Calu3 (cell line): ENCODE measurements at regions of chr10 and their contacts with region 1.

Region 1: DNA sequence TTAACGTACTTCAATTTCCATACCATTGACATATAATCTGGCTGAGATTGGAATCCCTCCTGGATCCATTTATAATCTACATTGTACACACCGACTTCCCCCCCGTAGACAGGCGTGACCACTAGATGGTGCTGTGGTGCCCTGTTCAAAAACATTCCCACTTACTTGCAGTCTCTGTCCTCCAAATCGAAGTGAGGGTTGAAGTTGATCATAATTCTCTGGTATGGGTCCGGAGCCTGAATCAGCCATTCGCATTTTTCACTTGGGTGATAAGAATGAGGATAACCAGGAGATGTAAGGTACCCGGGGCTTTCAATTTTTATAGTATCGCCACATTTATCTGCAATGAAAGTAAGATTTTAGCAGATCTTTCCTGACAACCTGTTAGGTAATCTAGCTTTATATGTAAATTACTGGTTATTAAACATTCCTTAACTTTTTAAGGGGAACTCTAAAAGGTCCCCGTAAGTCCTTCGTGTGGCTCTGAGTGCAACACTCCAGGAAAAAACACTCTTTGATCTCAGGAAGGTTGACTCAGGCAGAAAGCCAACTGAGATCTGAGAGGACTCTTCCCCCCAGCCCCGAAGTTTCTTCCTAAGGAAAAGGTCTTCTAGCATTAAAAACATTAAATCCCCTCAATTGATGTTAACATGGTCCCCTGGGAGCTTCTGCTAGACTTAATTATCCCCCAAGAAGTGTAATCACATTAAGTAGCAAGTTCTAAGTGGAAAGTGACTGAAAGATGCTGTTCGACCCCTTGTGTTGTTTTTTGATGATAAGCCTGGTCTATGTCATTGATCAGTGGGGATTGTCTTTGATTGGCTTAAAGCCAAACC is 3.7 kb downstream of the NRP1 start:
- DNase-seq: peak; percentile 87
- H3K4me3 Mint-ChIP-seq: peak overlapping the region; percentile 85
- H3K27ac Mint-ChIP-seq: peak overlapping the region; percentile 90
- H3K4me1 Mint-ChIP-seq: peaks cover 38% of the 10 kb centered on the region
- H3K27me3 Mint-ChIP-seq: no peaks in the 10 kb centered on the region
- CTCF ChIP-seq: peak; percentile 73

Region 2: GRCh38 chr10:33509231-33509831 is 178.6 kb after region 1 on chr10:
- CTCF ChIA-PET with region 1: no interaction called
- intact Hi-C with region 1: loop called (anchors 10 kb)
- DNase-seq: peak; percentile 75
- H3K4me3 Mint-ChIP-seq: peak overlapping the region; percentile 36
- H3K27ac Mint-ChIP-seq: peak overlapping the region; percentile 95
- H3K4me1 Mint-ChIP-seq: peaks cover 16% of the 10 kb centered on the region
- H3K27me3 Mint-ChIP-seq: no peaks in the 10 kb centered on the region
- CTCF ChIP-seq: no peak

Region 3: GRCh38 chr10:33715303-33715975 is 384.7 kb after region 1 on chr10:
- CTCF ChIA-PET with region 1: no interaction called
- intact Hi-C with region 1: loop called (anchors 10 kb)
- DNase-seq: no peak
- H3K4me3 Mint-ChIP-seq: no peak overlapping the region
- H3K27ac Mint-ChIP-seq: no peak overlapping the region
- H3K4me1 Mint-ChIP-seq: peaks cover 9% of the 10 kb centered on the region
- H3K27me3 Mint-ChIP-seq: no peaks in the 10 kb centered on the region
- CTCF ChIP-seq: no peak

Region 4: DNA sequence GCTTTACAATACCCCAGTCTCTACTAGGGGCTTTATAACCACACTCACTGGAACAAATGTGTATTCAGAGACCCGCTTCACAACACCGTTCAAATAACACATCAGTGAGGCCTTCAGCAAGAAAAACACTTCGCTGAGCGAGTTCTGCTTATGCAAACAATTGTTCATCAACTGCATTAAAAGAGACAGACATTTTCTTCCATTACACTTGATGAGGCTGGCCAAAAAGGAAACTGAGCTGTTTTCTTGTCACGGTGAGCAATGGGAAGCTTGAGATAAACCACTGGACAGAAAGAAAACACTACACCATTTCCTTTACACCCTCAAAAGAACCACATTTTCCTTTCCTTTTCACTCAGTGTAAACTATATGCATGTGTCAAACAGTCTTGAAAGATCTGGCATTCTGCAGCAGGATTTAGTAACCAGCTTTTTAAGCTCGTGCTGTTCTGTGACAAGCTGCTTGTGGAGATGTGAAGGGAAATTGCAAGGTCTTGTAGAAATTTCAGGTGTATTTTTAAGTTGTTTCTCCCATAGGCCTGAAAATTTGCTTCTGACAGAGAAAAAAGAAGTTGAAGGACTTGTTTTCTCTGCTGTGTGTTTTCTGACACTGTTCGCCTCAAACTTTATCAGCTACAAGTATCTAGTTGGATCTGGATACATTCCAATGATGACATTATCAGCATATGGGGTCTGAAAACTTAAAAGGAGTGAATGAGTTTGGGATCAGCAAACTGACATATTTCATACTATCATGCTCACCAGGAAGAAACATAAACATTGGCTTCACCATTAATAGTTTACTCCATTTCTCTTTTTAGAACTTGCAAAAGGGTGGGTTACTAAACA is 791.2 kb after region 1 on chr10:
- CTCF ChIA-PET with region 1: interaction called, 3 read pairs
- intact Hi-C with region 1: loop called (anchors 5 kb)
- DNase-seq: no peak
- H3K4me3 Mint-ChIP-seq: peak overlapping the region; percentile 17
- H3K27ac Mint-ChIP-seq: peak overlapping the region; percentile 42
- H3K4me1 Mint-ChIP-seq: peaks cover 46% of the 10 kb centered on the region
- H3K27me3 Mint-ChIP-seq: no peaks in the 10 kb centered on the region
- CTCF ChIP-seq: no peak

Region 5: GRCh38 chr10:34637418-34637911 is 1306.7 kb after region 1 on chr10:
- CTCF ChIA-PET with region 1: interaction called, 3 read pairs
- intact Hi-C with region 1: loop called (anchors 5 kb)
- DNase-seq: peak; percentile 83
- H3K4me3 Mint-ChIP-seq: no peak overlapping the region
- H3K27ac Mint-ChIP-seq: peak overlapping the region; percentile 8
- H3K4me1 Mint-ChIP-seq: peaks cover 40% of the 10 kb centered on the region
- H3K27me3 Mint-ChIP-seq: no peaks in the 10 kb centered on the region
- CTCF ChIP-seq: peak; percentile 96